Naive thymus-derived CD4-positive, alpha-beta T cell (primary cell): ENCODE measurements at regions of chrX and their contacts with region 1.

Region 1: DNA sequence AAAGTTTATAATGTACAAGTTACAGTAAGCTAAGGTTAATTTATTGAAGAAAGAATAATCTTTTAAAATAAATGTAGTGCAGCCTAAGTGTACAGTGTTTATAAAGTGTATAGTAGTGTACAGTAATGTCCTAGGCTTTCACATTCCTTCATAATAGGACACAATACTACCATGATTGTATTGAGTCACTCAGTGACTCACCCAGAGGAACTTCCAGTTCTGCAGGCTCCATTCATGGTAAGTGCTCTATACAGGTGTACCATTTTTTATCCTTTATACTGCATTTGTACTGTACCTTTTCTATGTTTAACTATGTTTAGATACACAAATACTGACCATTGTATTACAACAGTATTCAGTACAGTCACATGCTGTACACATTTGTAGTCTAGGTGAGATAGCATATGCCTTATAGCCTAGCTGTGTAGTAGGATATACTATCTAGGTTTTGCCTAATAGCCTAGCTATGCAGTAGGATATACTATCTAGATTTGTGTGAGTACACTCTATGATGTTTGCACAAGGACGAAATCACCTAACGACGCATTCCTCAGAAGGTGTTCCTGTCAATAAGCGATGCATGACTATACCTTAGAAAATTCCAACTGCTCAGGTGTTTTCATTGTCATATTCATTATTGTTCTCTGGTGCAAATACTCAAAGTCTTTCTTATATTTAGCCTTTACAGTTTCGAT is 5.5 kb upstream of the TMEM255A start:
- DNase-seq: no peak
- ATAC-seq: no peak
- H3K4me3 ChIP-seq: no peak overlapping the region
- H3K4me3 Mint-ChIP-seq: no peak overlapping the region
- H3K27ac ChIP-seq: no peak overlapping the region
- H3K27ac Mint-ChIP-seq: no peak overlapping the region
- H3K4me1 ChIP-seq: no peaks in the 10 kb centered on the region
- H3K4me1 Mint-ChIP-seq: peaks cover 0 to 3% (median 0%) of the 10 kb centered on the region in 7 donors
- H3K27me3 ChIP-seq: no peaks in the 10 kb centered on the region
- H3K27me3 Mint-ChIP-seq: peaks cover 5 to 58% (median 28%) of the 10 kb centered on the region in 5 donors

Region 2: GRCh38 chrX:118679290-118679689 is 1637.4 kb before region 1 on chrX:
- CTCF ChIA-PET with region 1: no interaction called
- POLR2A ChIA-PET with region 1: no interaction called
- intact Hi-C with region 1: no loop called
- DNase-seq: no peak
- ATAC-seq: no peak
- H3K4me3 ChIP-seq: no peak overlapping the region
- H3K4me3 Mint-ChIP-seq: no peak overlapping the region
- H3K27ac ChIP-seq: no peak overlapping the region
- H3K27ac Mint-ChIP-seq: peak overlapping the region in 2 of 9 donors; percentile 38 to 70
- H3K4me1 ChIP-seq: no peaks in the 10 kb centered on the region
- H3K4me1 Mint-ChIP-seq: no peaks in the 10 kb centered on the region
- H3K27me3 ChIP-seq: no peaks in the 10 kb centered on the region
- H3K27me3 Mint-ChIP-seq: no peaks in the 10 kb centered on the region

Region 3: DNA sequence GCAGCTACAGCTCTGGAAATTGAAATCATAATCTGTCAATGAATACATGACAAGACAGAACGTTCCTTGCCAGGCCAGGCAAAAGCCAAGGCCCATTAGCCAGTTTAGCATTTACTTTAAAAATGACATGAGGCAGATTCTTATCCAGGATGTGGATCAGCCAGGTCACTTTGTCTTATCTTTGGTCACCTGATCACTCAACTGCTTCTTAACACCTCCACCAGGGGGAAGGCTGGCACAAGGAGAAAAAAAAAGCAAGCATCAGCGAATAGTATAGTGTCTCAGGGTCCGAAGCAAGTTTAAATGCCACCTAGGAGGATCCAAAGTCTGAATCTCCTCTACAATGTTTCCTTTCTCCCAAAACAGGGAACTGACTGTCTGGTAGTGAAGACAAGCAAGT is 64.0 kb after region 1 on chrX:
- CTCF ChIA-PET with region 1: no interaction called
- POLR2A ChIA-PET with region 1: no interaction called
- intact Hi-C with region 1: loop called in 1 of 2 experiments (anchors 2 kb)
- DNase-seq: peak in 7 of 9 donors; percentile 13 to 66 (median 54)
- ATAC-seq: peak; percentile 80
- H3K4me3 ChIP-seq: no peak overlapping the region
- H3K4me3 Mint-ChIP-seq: no peak overlapping the region
- H3K27ac ChIP-seq: no peak overlapping the region
- H3K27ac Mint-ChIP-seq: peak overlapping the region in 2 of 9 donors; percentile 23 to 57
- H3K4me1 ChIP-seq: peaks cover 0 to 4% of the 10 kb centered on the region in 2 donors
- H3K4me1 Mint-ChIP-seq: peaks cover 0 to 6% (median 4%) of the 10 kb centered on the region in 7 donors
- H3K27me3 ChIP-seq: no peaks in the 10 kb centered on the region
- H3K27me3 Mint-ChIP-seq: peaks cover 0 to 12% (median 4%) of the 10 kb centered on the region in 5 donors